ENCODE measurements at regions of chr9 and their contacts with region 1.

Region 1: DNA sequence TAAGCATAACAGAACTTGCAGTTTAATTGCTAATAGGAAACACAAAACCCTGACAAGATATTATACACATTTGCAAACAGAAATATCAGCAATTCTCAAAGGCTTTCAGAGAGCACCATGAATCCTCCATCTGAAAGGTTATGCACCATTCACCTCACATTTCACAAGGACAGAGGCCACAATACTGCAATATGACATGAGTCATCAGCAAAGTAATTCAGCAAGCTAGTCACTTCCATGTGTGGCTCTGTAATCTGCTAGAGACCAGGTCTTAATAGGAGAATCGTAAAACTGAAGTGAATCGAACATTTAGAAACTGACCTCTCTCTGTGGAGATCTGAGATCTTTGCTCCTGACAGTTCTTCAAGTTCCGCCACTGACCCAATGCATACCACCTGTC is 28.3 kb downstream of the IARS1 start:
- DNase-seq: peak; percentile 25
- H3K4me3 ChIP-seq: no peak overlapping the region
- H3K27ac ChIP-seq: no peak overlapping the region
- H3K4me1 ChIP-seq: no peaks in the 10 kb centered on the region
- H3K27me3 ChIP-seq: no peaks in the 10 kb centered on the region
- CTCF ChIP-seq: no peak

Region 2: GRCh38 chr9:91422758-91423711 is 842.1 kb before region 1 on chr9:
- CTCF ChIA-PET with region 1: no interaction called
- dilution Hi-C with region 1: no loop called
- in situ Hi-C with region 1: no loop called
- intact Hi-C with region 1: no loop called
- DNase-seq: peak; percentile 66
- H3K4me3 ChIP-seq: peak overlapping the region; percentile 62 to 91 (median 67)
- H3K27ac ChIP-seq: peak overlapping the region; percentile 35
- H3K4me1 ChIP-seq: peaks cover 40% of the 10 kb centered on the region
- H3K27me3 ChIP-seq: no peaks in the 10 kb centered on the region
- CTCF ChIP-seq: peak in 1 of 2 donors; percentile 45

Region 3: DNA sequence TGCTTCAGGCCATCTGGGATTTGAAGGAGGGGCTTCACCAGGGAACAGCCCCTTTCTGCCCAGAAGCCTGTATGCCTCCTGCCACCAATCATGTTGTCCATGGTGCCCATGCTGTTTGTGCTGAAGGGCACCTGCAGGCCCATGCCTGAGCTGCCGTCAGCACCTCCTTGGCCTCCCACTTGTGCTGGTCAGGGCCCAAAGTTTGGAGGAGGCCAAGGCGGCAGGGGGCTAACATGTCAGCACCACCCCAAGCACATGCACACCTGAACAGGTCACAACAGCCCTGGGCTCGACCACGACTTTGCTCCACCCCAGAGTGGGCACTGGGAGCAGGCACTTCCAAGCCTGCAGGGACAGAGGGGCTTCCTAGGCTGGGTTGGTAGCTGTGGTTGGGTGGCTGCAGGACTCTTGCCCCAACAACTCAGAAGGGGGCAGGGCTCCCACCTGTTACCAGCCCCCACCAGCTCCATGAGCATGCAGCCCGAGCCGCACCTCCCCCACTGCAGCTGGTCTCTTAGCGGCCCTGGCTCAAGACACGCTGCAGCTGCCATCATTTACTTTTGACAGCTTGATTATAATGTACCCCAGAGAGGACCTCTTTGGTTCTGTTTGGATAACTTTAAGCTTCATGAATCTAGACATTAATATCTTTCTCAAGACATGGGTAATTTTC is 821.7 kb before region 1 on chr9:
- CTCF ChIA-PET with region 1: no interaction called
- dilution Hi-C with region 1: no loop called
- in situ Hi-C with region 1: no loop called
- intact Hi-C with region 1: no loop called
- DNase-seq: no peak
- H3K4me3 ChIP-seq: no peak overlapping the region
- H3K27ac ChIP-seq: no peak overlapping the region
- H3K4me1 ChIP-seq: no peaks in the 10 kb centered on the region
- H3K27me3 ChIP-seq: no peaks in the 10 kb centered on the region
- CTCF ChIP-seq: no peak

Region 4: DNA sequence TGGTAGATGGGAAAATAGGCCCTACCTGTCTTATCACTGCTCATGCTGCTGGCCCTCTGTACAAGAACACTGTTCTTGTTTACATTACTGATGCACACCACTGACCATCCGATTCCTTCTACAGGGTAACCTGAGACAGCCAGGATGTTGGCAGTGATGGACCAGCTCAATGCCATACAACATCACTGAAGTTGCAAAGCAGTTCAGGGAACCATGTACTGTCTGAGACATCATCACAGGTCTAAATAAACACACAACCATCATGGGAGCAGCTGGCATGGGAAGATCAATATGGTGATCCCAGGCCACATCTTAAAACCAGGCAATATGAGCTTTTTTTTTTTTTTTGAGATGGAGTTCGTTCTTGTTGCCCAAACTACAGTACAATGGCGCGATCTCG is 30.6 kb before region 1 on chr9:
- CTCF ChIA-PET with region 1: no interaction called
- dilution Hi-C with region 1: no loop called
- in situ Hi-C with region 1: no loop called
- intact Hi-C with region 1: no loop called
- DNase-seq: no peak
- H3K4me3 ChIP-seq: no peak overlapping the region
- H3K27ac ChIP-seq: no peak overlapping the region
- H3K4me1 ChIP-seq: no peaks in the 10 kb centered on the region
- H3K27me3 ChIP-seq: no peaks in the 10 kb centered on the region
- CTCF ChIP-seq: no peak

Region 5: GRCh38 chr9:92312887-92313623 is 47.9 kb after region 1 on chr9:
- CTCF ChIA-PET with region 1: no interaction called
- dilution Hi-C with region 1: loop called (anchors 5 kb)
- in situ Hi-C with region 1: no loop called
- intact Hi-C with region 1: no loop called
- DNase-seq: peak; percentile 61
- H3K4me3 ChIP-seq: no peak overlapping the region
- H3K27ac ChIP-seq: peak overlapping the region; percentile 17
- H3K4me1 ChIP-seq: peaks cover 11% of the 10 kb centered on the region
- H3K27me3 ChIP-seq: no peaks in the 10 kb centered on the region
- CTCF ChIP-seq: no peak